Vagina (tissue), 2 donors: ENCODE measurements at regions of chr2 and their contacts with region 1.

Region 1: GRCh38 chr2:219057709-219058540 is 2.8 kb downstream of the IHH start:
- DNase-seq: no peak
- H3K4me3 ChIP-seq: peak overlapping the region in 1 of 2 donors; percentile 17
- H3K27ac ChIP-seq: no peak overlapping the region
- H3K4me1 ChIP-seq: peaks cover 37% of the 10 kb centered on the region
- H3K27me3 ChIP-seq: peaks cover 27% of the 10 kb centered on the region
- CTCF ChIP-seq: peak; percentile 66 to 81 (median 69)
- POLR2A ChIP-seq: no peak

Region 2: DNA sequence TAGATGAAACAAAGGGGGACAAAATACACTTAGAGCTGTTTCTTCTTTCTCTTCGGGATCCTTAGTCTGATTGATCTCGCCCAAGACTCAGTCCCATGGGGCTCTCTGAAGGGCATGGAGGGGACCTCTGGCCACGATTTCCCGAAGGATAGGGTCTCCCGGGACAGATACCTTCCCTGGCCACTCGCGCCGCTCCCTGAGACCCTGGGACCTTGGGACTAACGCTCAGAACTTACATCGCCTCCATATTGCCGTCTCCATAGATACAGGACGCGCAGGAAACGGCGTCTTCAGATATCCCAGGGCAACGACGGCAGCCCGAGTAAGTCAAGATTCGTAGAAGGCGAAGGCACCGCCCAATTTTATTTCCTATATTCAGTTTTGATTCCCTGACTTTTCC is 16.7 kb before region 1 on chr2 and contains the start of gene CFAP65:
- intact Hi-C with region 1: no loop called
- DNase-seq: no peak
- H3K4me3 ChIP-seq: no peak within 1 kb of the TSS
- H3K27ac ChIP-seq: no peak within 1 kb of the TSS
- H3K4me1 ChIP-seq: no peaks in the 10 kb centered on the region
- H3K27me3 ChIP-seq: no peaks in the 10 kb centered on the region
- CTCF ChIP-seq: no peak
- POLR2A ChIP-seq: no peak
- total RNA-seq, gene CFAP65: not detected

Region 3: DNA sequence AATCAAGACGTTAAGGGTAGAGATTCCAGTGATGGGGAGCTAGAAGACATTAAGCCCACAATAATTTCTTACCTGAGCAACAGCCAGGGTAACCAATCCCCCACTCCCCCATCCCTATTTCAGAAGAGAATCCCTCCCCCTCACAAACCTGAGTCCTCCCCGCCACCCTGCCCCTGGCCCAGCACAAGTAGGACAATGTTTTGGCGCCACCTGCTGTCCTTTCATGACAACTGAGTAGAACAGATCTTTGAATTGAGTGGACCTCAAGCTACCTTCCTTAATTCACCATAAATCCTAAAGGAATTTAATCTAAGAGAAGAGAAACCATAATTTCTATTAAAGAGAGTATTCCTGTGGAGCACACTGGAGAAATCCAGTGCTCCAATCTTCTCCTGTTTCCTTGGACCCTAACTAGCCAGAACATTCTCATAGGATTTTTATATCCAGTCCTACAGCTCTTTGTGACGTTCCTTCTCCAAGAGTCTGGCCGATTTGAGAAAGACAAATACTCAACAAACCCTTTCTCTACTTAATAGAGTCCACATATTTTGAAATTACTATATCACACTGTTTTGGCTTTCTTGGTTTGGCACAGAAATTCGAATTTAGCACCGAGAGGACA is 61.6 kb after region 1 on chr2:
- intact Hi-C with region 1: loop called (anchors 10 kb)
- DNase-seq: no peak
- H3K4me3 ChIP-seq: no peak overlapping the region
- H3K27ac ChIP-seq: no peak overlapping the region
- H3K4me1 ChIP-seq: peaks cover 19% of the 10 kb centered on the region
- H3K27me3 ChIP-seq: no peaks in the 10 kb centered on the region
- CTCF ChIP-seq: peak; percentile 16 to 53 (median 45)
- POLR2A ChIP-seq: no peak